Heart right ventricle (tissue), 16 donors: ENCODE measurements at regions of chr13 and their contacts with region 1.

Region 1: DNA sequence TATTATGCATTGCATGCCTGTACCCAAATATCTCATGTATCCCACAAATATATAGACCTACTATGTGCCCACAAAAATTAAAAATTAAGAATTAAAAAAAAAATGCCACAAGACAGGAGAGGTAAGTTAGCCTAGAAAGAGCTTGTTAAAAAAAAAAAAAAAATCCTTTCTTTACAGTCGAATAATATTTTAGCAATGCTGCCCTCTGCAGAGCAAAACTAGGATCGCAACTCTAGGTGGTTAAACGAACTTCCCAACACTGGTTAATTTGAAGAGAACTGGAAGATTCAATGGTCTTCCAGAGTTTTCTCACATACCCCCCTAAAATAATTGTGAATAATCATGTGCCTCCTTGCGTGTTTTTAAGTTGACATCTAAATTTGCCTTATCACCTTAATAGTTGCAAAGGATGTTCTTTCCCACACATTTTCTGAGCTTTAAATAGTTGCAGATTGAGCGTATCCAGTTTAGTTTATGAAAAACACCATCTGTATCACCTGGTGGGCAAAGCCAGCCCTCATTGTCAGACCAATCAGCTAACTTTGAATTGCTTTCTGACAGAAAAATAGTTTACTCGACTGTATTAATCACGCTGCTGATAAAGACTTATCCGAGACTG is 47.4 kb upstream of the RCBTB2 start:
- DNase-seq: peak in 1 of 2 donors; percentile 87
- ATAC-seq: peak in 6 of 8 donors; percentile 45 to 70 (median 49)
- H3K4me3 ChIP-seq: no peak overlapping the region
- H3K27ac ChIP-seq: peak overlapping the region in 3 of 10 donors; percentile 35 to 88 (median 37)
- H3K4me1 ChIP-seq: peaks cover 0 to 51% (median 27%) of the 10 kb centered on the region in 9 donors
- H3K27me3 ChIP-seq: no peaks in the 10 kb centered on the region
- CTCF ChIP-seq: peak; percentile 58 to 87 (median 75)

Region 2: DNA sequence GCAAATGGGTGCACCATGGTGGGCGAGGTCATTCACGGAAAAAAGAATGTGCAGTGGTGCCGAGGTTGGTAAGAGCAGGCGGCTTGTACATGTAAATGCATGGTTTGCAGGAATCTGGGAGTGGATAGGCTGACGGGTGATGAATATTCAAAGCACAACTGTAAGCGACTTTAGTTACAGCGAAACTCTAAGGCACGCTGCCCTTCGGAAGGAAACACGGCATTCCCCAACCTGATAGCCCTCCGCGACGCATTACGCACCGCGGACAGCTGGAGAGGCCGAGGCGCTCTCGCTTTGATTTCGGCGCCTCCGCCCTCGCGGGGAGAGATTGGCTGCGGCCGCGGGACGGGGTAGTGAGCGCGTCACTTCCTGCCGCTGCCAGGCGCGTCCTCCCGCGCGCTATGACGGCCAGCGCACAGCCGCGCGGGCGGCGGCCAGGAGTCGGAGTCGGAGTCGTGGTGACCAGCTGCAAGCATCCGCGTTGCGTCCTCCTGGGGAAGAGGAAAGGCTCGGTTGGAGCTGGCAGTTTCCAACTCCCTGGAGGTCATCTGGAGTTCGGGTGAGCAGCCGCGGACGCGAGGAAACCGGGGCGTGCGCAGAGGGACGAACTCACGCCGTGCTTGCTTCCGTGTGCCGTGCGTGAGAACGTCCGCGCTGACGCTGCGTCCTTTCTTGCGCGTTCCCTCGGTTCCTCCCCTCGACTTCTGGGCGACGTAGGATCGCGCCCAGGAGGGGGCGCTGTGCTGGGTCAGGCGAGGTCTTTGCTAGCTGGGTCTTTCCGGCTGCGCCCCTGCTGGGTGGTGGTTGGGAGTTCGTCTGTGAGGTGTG is 542.7 kb before region 1 on chr13 and contains the start of gene NUDT15:
- intact Hi-C with region 1: loop called in 1 of 10 experiments (anchors 10 kb)
- DNase-seq: peak; percentile 92 to 94
- ATAC-seq: peak; percentile 97 to 99 (median 99)
- H3K4me3 ChIP-seq: peak within 1 kb of the TSS; percentile 53 to 87 (median 66)
- H3K27ac ChIP-seq: peak within 1 kb of the TSS; percentile 91 to 98 (median 96)
- H3K4me1 ChIP-seq: peaks cover 4 to 26% (median 14%) of the 10 kb centered on the region in 9 donors
- H3K27me3 ChIP-seq: no peaks in the 10 kb centered on the region
- CTCF ChIP-seq: peak; percentile 86 to 99 (median 97)
- total RNA-seq, gene NUDT15: 9.6 to 13.7 (median 11.3) TPM

Region 3: DNA sequence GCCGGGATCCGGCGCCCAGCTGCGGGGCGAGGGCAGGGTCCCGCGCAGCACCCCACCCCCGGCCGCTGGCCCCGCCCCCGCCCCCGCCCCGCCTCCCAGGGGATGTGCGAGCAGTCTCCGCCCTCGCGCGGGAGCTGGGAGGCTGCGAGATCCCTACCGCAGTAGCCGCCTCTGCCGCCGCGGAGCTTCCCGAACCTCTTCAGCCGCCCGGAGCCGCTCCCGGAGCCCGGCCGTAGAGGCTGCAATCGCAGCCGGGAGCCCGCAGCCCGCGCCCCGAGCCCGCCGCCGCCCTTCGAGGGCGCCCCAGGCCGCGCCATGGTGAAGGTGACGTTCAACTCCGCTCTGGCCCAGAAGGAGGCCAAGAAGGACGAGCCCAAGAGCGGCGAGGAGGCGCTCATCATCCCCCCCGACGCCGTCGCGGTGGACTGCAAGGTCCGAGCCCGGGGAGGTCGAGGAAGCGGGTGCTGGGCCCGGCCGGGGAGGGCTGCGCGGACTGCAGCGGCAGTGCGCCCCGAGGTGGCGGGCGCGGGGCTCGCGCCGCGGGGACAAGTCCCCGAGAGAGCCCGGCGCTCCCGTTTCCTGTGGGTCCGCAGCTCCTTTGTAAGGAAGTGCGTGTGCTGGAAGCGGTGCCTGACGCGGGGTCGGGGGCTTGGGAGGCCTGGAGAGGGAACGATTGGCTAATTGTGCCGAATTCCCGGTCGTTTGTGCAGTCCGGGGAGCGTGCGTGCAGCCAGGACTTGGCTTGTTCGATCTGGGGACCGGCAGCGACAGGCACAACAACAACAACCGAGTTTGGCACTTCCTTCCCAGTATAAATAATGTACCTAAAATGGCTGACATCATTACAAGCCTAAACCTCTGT is 347.0 kb before region 1 on chr13 and contains the start of gene ITM2B:
- intact Hi-C with region 1: loop called in 2 of 10 experiments (anchors 5 to 10 kb)
- DNase-seq: peak; percentile 80 to 86
- ATAC-seq: peak; percentile 85 to 96 (median 93)
- H3K4me3 ChIP-seq: peak within 1 kb of the TSS; percentile 86 to 100 (median 97)
- H3K27ac ChIP-seq: peak within 1 kb of the TSS; percentile 98 to 100 (median 100)
- H3K4me1 ChIP-seq: peaks cover 0 to 55% (median 44%) of the 10 kb centered on the region in 9 donors
- H3K27me3 ChIP-seq: no peaks in the 10 kb centered on the region
- CTCF ChIP-seq: peak in 8 of 9 donors; percentile 25 to 67 (median 53)
- total RNA-seq, gene ITM2B: 434 to 636 (median 511) TPM

Region 4: GRCh38 chr13:48400850-48401291 is 179.4 kb before region 1 on chr13:
- intact Hi-C with region 1: loop called in 6 of 10 experiments (anchors 5 to 10 kb)
- DNase-seq: no peak
- ATAC-seq: peak; percentile 77 to 89 (median 86)
- H3K4me3 ChIP-seq: peak overlapping the region in 3 of 10 donors; percentile 2 to 17 (median 13)
- H3K27ac ChIP-seq: peak overlapping the region in 9 of 10 donors; percentile 59 to 93 (median 81)
- H3K4me1 ChIP-seq: peaks cover 0 to 82% (median 42%) of the 10 kb centered on the region in 9 donors
- H3K27me3 ChIP-seq: no peaks in the 10 kb centered on the region
- CTCF ChIP-seq: peak in 4 of 9 donors; percentile 30 to 47 (median 37)

Region 5: GRCh38 chr13:48505597-48506091 is 74.7 kb before region 1 on chr13:
- intact Hi-C with region 1: loop called in 2 of 10 experiments (anchors 10 kb)
- DNase-seq: peak in 1 of 2 donors; percentile 68
- ATAC-seq: peak; percentile 57 to 89 (median 84)
- H3K4me3 ChIP-seq: peak overlapping the region in 5 of 10 donors; percentile 6 to 29 (median 20)
- H3K27ac ChIP-seq: peak overlapping the region; percentile 47 to 92 (median 75)
- H3K4me1 ChIP-seq: peaks cover 0 to 77% (median 34%) of the 10 kb centered on the region in 9 donors
- H3K27me3 ChIP-seq: no peaks in the 10 kb centered on the region
- CTCF ChIP-seq: no peak

Region 6: GRCh38 chr13:48539550-48539949 is 40.7 kb before region 1 on chr13:
- intact Hi-C with region 1: loop called in 2 of 10 experiments (anchors 5 kb)
- DNase-seq: no peak
- ATAC-seq: peak in 1 of 8 donors; percentile 26
- H3K4me3 ChIP-seq: no peak overlapping the region
- H3K27ac ChIP-seq: no peak overlapping the region
- H3K4me1 ChIP-seq: peaks cover 14 to 34% (median 22%) of the 10 kb centered on the region in 9 donors
- H3K27me3 ChIP-seq: no peaks in the 10 kb centered on the region
- CTCF ChIP-seq: no peak